ENCODE measurements at regions of chr20 and their contacts with region 1.

Region 1: GRCh38 chr20:47150403-47151152 is 205.9 kb downstream of the ZMYND8 start:
- DNase-seq: peak; percentile 60 to 80 (median 72)
- ATAC-seq: peak; percentile 82 to 95
- H3K4me3 ChIP-seq: no peak overlapping the region
- H3K27ac ChIP-seq: no peak overlapping the region
- H3K4me1 ChIP-seq: no peaks in the 10 kb centered on the region
- H3K27me3 ChIP-seq: no peaks in the 10 kb centered on the region

Region 2: DNA sequence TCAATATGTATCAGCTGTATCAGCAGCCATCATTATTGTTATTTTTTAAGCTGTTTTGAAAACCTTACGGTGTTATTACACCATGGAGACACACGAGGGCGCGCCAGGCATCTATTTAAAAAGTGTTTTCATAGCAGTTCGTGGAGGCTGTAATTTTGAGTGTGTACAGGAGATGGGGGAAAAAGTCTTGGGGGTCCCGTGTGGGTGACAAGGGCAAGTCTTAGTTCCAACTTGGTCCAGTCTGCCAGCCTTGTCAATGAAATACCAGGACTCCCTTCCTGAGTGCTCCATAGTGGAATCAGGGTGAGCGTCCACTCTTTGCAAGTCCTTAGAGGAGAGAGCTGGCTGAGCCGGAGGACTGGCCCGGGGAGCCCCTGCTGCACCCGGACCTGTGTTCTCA is 397.9 kb before region 1 on chr20:
- intact Hi-C with region 1: loop called in 2 of 4 experiments (anchors 5 to 10 kb)
- DNase-seq: peak; percentile 49 to 81 (median 79)
- ATAC-seq: peak; percentile 15 to 51
- H3K4me3 ChIP-seq: no peak overlapping the region
- H3K27ac ChIP-seq: no peak overlapping the region
- H3K4me1 ChIP-seq: no peaks in the 10 kb centered on the region
- H3K27me3 ChIP-seq: no peaks in the 10 kb centered on the region

Region 3: DNA sequence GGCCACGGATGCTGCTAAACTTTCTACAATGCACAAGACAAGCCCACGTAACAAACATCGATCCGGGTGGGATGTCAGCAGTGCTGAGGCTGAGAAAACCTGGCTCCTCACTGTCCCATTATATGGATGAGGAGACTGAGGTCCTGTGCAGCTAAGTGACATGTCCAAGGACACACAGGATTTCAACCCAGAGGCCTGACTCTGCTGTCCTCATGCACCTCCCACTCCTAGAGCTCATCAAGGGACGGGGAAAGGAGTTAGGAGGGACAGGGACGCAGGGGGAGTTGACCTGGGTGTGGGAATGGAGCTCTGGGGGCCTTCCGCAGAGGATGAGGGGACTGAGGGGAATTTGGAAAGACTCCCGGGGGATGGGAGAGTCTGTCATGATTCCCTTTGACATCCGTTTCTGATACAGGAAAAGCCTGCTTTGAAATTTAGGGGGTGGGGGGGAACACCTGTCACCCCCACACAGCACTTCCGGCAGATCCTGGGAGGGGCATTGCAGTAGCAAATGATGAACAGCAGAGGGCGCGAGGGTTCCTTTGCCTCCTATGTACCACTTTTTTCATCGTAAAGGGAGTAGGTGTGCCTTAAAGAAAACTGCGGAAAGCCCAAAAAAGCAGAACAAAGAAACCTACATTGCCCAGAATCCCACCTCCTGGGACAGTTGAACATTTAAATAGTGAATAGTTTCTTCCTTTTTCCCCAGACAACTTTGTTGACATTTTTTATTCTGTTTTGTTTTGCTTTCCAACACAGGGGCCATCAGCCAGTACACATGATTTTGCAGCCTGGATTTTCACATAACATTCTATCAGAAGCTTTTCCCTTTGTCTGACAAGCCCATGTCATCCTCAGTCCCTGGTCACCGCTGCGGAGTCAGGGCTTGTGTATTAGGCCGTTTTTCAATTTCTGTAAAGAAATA is 392.6 kb before region 1 on chr20:
- intact Hi-C with region 1: loop called in 3 of 4 experiments (anchors 5 to 10 kb)
- DNase-seq: peak; percentile 42 to 77 (median 73)
- ATAC-seq: peak in 1 of 2 donors; percentile 63
- H3K4me3 ChIP-seq: no peak overlapping the region
- H3K27ac ChIP-seq: no peak overlapping the region
- H3K4me1 ChIP-seq: no peaks in the 10 kb centered on the region
- H3K27me3 ChIP-seq: no peaks in the 10 kb centered on the region

Region 4: GRCh38 chr20:46767127-46767761 is 383.3 kb before region 1 on chr20:
- intact Hi-C with region 1: loop called in 2 of 4 experiments (anchors 5 to 10 kb)
- DNase-seq: no peak
- ATAC-seq: no peak
- H3K4me3 ChIP-seq: no peak overlapping the region
- H3K27ac ChIP-seq: no peak overlapping the region
- H3K4me1 ChIP-seq: no peaks in the 10 kb centered on the region
- H3K27me3 ChIP-seq: no peaks in the 10 kb centered on the region

Region 5: DNA sequence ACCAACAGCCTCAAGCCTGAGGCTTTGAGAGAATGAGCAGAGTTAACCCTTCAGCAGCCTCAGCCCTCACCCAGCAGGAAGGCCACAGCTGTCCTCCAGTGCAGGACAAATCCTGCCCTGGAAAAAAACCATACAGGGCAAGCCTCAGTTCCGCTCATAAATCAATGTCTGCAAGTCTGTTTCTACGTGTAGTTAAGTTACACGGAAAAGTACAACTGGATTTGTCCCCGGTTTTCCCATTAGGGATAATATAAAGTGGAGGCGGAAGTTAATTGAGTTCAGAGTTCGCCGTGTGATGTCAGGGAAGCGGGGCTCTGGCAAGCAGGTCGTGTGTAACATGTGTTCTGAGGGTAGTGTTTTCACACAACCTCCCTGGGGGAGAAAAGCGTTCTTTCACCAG is 300.2 kb before region 1 on chr20:
- intact Hi-C with region 1: no loop called
- DNase-seq: no peak
- ATAC-seq: no peak
- H3K4me3 ChIP-seq: no peak overlapping the region
- H3K27ac ChIP-seq: no peak overlapping the region
- H3K4me1 ChIP-seq: no peaks in the 10 kb centered on the region
- H3K27me3 ChIP-seq: no peaks in the 10 kb centered on the region

Measured in right cardiac atrium (tissue), 5 donors.